Calu3 (cell line): ENCODE measurements at regions of chr13 and their contacts with region 1.

Region 1: DNA sequence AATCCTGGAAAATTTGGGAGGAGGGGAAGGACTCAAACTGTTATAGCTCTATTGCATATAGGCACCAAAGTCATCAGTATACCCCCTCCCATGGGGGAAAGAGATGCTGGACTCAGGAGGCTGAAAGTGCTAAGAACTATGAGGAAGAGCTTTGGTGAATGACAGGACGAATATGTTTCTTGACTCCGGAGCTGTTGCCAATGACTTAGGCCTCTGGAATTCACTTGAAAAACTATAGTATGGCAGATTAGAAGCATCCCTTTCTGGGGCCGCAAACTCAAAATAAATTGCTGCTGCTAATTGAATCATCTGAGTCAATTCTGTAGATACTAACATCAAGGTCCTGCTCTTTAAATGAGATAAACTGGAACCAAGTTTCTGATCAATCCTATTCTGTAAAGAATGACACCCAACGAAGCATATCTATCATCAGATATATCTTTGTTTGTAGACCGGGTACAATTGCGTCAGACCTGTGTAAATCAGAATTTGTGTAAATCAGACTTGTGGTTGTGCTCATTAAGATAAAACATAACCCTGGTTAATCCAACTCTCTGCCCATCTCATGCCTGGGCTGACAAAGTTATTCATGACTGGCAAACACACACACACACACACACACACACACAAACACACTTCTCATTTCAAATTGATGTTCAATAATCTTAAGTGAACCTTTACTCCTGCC is 1793.8 kb upstream of the PCDH20 start:
- DNase-seq: no peak
- H3K4me3 Mint-ChIP-seq: no peak overlapping the region
- H3K27ac Mint-ChIP-seq: no peak overlapping the region
- H3K4me1 Mint-ChIP-seq: no peaks in the 10 kb centered on the region
- H3K27me3 Mint-ChIP-seq: no peaks in the 10 kb centered on the region
- CTCF ChIP-seq: no peak

Region 2: DNA sequence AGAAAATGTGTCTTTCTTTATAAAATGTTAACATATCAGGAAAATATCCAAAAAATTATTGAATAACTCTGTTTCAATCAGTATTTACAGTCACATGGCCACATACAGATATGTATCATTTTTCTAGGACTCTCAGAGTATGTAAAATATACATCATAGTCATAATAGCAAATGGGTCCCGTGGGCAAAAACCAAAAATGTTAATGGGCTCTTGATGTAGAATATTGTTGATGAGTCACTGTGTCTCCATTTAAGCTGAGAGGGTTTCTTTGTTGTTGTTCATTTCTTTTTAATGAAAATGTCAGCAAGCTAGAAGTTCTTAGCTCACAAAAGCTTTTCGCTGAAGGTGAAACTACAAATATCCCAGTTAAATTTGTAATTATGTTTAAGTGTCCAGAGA is 80.8 kb before region 1 on chr13:
- CTCF ChIA-PET with region 1: no interaction called
- intact Hi-C with region 1: no loop called
- DNase-seq: no peak
- H3K4me3 Mint-ChIP-seq: no peak overlapping the region
- H3K27ac Mint-ChIP-seq: no peak overlapping the region
- H3K4me1 Mint-ChIP-seq: no peaks in the 10 kb centered on the region
- H3K27me3 Mint-ChIP-seq: no peaks in the 10 kb centered on the region
- CTCF ChIP-seq: no peak

Region 3: GRCh38 chr13:64099994-64100393 is 890.5 kb after region 1 on chr13:
- CTCF ChIA-PET with region 1: no interaction called
- intact Hi-C with region 1: loop called (anchors 10 kb)
- DNase-seq: no peak
- H3K4me3 Mint-ChIP-seq: no peak overlapping the region
- H3K27ac Mint-ChIP-seq: no peak overlapping the region
- H3K4me1 Mint-ChIP-seq: no peaks in the 10 kb centered on the region
- H3K27me3 Mint-ChIP-seq: no peaks in the 10 kb centered on the region
- CTCF ChIP-seq: no peak